Activated CD8-positive, alpha-beta T cell treated with anti-CD3 and anti-CD28 coated beads for 36 hours (primary cell): ENCODE measurements at regions of chr3 and their contacts with region 1.

Region 1: DNA sequence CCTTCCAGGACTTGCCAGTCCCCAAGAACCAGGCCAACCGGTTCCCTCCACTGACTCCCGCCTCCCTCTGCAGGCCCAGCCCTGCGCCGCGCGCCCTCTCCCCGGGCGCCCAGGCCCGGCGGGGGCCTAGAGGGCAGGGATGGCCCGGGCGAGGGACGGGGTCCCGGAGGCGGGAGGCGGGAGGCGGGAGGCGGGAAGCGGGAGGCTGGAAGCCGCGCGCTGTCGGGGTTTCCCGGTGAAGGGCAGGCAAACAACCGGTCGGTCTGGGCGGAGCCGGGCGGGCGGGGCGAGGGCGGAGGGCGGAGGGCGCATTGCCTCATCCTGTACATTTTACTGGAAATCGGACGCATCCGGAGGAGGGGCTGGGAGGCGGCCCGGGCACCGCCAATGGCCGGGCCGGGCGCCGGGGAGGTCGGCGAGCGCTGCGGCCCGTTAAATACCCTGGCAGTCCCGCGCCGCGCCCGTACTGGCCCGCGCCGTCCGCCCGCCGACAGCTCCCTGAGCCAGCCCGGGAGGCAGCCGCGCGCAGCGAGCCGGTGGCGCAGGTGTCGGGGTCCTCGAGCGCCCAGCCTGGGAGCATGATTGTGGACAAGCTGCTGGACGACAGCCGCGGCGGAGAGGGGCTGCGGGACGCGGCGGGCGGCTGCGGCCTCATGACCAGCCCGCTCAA is at the start of gene NFKBIZ:
- DNase-seq: peak; percentile 96
- ATAC-seq: peak; percentile 80
- H3K4me3 Mint-ChIP-seq: peak within 1 kb of the TSS; percentile 87
- H3K27ac Mint-ChIP-seq: peak within 1 kb of the TSS; percentile 96
- H3K4me1 Mint-ChIP-seq: peaks cover 44% of the 10 kb centered on the region
- H3K27me3 Mint-ChIP-seq: no peaks in the 10 kb centered on the region
- CTCF ChIP-seq: no peak
- total RNA-seq, gene NFKBIZ: 62.1 to 70.6 TPM

Region 2: DNA sequence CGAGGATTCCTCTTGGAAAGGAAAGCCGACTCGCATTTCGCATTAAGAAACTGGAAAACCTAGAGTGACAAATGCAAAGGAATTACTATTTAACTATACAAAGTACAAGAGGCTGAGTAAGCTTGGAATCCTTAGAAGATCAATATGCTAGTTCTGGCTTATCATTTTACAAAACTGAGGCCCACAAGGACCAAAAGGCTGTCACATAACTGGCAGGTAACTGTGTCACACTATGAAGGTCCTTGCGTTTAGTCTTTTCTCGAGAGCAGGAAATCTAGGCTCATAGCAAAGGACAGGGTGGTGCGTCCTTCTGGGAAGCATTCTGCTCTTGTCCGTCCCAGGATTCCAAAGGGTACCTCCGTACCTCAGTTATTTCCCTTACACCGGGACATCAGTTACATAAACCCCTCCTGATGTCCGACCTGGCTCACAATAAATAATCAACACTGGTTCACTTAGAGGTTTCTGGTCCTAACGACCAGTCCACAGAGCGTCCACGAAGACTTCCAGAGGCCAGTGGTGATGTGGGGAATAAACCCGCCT is 163.2 kb before region 1 on chr3:
- CTCF ChIA-PET with region 1: no interaction called
- POLR2A ChIA-PET with region 1: interaction called, 9 read pairs
- intact Hi-C with region 1: loop called (anchors 10 kb)
- DNase-seq: no peak
- ATAC-seq: no peak
- H3K4me3 Mint-ChIP-seq: peak overlapping the region; percentile 100
- H3K27ac Mint-ChIP-seq: peak overlapping the region; percentile 100
- H3K4me1 Mint-ChIP-seq: peaks cover 39% of the 10 kb centered on the region
- H3K27me3 Mint-ChIP-seq: no peaks in the 10 kb centered on the region
- CTCF ChIP-seq: no peak

Region 3: DNA sequence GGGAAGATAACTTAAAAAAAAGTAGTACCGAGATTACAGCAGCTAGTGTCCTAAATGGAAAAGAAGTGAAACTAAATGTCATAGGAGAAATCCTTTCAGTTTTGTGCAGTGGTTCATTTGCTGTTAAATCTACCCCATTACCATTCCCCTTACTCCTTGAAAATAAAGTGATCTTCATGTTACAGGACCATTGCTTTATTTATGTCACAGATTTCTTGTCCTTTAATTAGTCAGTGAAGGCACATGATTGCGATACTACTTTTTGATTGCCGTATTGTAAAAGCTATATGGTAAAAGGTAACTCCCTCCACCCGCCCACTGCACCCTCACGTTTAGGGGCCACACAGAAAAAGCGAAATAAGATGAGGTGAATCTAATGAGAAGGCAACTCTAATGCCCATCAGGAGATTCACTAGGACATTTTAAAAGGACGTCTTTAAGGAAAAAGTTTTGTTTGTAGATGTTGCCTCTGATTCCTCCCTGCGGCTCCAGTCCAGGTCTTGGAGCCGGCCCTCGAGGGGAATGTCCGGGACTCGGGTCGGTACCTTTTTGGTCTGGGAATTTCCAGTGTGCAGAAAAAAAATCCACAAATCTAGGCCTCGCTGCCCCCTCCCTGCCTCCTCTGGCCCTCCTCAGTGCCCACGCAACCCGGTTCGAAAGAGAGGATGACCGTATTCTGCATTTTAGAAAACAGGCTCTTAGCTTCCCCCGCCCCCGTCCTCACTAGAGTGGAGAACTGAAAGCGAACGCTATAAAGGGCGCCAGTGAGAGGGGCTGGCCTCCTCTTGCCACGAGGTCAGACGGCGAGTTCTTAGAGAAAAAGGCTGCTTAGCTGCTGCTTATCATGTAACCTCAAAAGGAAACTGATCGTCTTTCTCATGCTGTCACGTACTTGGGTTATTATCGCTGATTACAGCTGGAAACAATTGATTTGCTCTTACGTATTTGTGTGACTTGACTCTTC is 21.7 kb before region 1 on chr3:
- CTCF ChIA-PET with region 1: interaction called, 11 read pairs
- POLR2A ChIA-PET with region 1: interaction called, 151 read pairs
- intact Hi-C with region 1: loop called (anchors 1 kb)
- DNase-seq: peak; percentile 98
- ATAC-seq: peak; percentile 86
- H3K4me3 Mint-ChIP-seq: peak overlapping the region; percentile 84
- H3K27ac Mint-ChIP-seq: peak overlapping the region; percentile 95
- H3K4me1 Mint-ChIP-seq: peaks cover 63% of the 10 kb centered on the region
- H3K27me3 Mint-ChIP-seq: no peaks in the 10 kb centered on the region
- CTCF ChIP-seq: no peak

Region 4: DNA sequence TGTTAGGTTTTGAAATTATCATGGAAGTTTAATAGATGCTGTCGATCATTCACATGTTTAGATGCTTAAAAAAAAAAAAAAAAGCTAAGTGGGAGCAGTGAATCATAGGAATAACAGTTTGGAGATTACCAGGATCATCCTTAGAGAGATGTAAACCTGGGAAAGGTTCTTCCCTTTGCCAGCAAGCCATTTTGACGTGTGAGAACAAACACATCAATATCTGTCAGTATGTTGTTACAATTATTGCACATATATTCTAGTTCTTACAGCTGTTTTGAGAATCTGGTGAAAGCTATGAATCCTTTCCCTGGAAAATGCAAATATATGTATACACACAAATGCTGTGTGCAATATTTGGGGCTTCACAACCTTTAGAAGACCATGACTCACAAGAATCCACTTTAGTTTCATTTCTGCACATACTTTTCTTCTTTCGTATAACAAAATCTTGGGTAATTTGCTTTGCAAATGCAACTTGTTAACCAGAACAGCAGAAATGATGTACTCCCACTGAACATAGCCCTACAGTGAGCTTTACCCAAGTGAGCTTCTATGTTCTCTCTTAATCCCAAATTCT is 12.1 kb after region 1 on chr3:
- CTCF ChIA-PET with region 1: interaction called, 3 read pairs
- POLR2A ChIA-PET with region 1: interaction called, 14 read pairs
- intact Hi-C with region 1: no loop called
- DNase-seq: no peak
- ATAC-seq: peak; percentile 48
- H3K4me3 Mint-ChIP-seq: no peak overlapping the region
- H3K27ac Mint-ChIP-seq: peak overlapping the region; percentile 31
- H3K4me1 Mint-ChIP-seq: peaks cover 69% of the 10 kb centered on the region
- H3K27me3 Mint-ChIP-seq: no peaks in the 10 kb centered on the region
- CTCF ChIP-seq: no peak

Region 5: GRCh38 chr3:102084006-102084405 is 234.8 kb after region 1 on chr3:
- CTCF ChIA-PET with region 1: no interaction called
- POLR2A ChIA-PET with region 1: no interaction called
- intact Hi-C with region 1: loop called (anchors 2 kb)
- DNase-seq: no peak
- ATAC-seq: no peak
- H3K4me3 Mint-ChIP-seq: no peak overlapping the region
- H3K27ac Mint-ChIP-seq: no peak overlapping the region
- H3K4me1 Mint-ChIP-seq: peaks cover 35% of the 10 kb centered on the region
- H3K27me3 Mint-ChIP-seq: peaks cover 2% of the 10 kb centered on the region
- CTCF ChIP-seq: no peak

Region 6: DNA sequence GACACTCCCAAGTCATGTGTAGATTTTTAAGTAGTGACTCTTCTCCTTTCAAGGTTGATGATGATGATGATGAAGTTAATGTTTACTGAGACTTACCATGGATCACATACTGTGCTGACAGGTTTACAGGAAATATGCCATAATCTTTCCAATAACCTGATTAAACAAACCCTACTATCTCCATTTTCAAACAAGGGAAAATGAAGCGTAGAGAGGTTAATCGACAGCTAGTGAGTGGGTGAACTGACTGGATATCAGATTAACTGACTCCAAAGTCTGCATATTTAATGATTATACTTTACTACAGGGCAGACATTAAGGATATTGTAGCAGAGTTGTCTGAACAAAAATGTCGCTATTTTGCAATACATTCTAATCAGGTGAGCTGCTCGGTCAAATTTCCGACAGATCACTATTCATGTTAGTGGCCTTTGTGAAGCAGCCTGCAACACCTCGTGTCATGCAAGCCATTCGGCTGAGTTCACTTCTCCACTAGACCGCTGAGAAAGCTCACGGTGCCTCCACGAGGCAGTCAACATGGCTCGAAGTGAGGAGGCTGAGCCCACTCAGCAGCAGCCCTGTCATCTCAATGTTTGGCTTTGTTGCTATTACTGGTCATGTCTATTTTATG is 264.3 kb after region 1 on chr3:
- CTCF ChIA-PET with region 1: no interaction called
- POLR2A ChIA-PET with region 1: interaction called, 11 read pairs
- intact Hi-C with region 1: no loop called
- DNase-seq: peak; percentile 26
- ATAC-seq: peak; percentile 54
- H3K4me3 Mint-ChIP-seq: no peak overlapping the region
- H3K27ac Mint-ChIP-seq: peak overlapping the region; percentile 55
- H3K4me1 Mint-ChIP-seq: peaks cover 28% of the 10 kb centered on the region
- H3K27me3 Mint-ChIP-seq: no peaks in the 10 kb centered on the region
- CTCF ChIP-seq: no peak